ENCODE measurements at regions of chr16 and their contacts with region 1.

Region 1: GRCh38 chr16:75402821-75403475 is 30.4 kb downstream of the CFDP1 start:
- DNase-seq: no peak
- H3K4me3 Mint-ChIP-seq: no peak overlapping the region
- H3K27ac Mint-ChIP-seq: no peak overlapping the region
- H3K4me1 Mint-ChIP-seq: peaks cover 9% of the 10 kb centered on the region
- H3K27me3 Mint-ChIP-seq: no peaks in the 10 kb centered on the region

Region 2: GRCh38 chr16:75234856-75235696 is 167.9 kb before region 1 on chr16:
- intact Hi-C with region 1: loop called (anchors 5 kb)
- DNase-seq: no peak
- H3K4me3 Mint-ChIP-seq: no peak overlapping the region
- H3K27ac Mint-ChIP-seq: no peak overlapping the region
- H3K4me1 Mint-ChIP-seq: no peaks in the 10 kb centered on the region
- H3K27me3 Mint-ChIP-seq: peaks cover 2% of the 10 kb centered on the region

Region 3: GRCh38 chr16:75311383-75311938 is 91.5 kb before region 1 on chr16:
- intact Hi-C with region 1: no loop called
- DNase-seq: no peak
- H3K4me3 Mint-ChIP-seq: no peak overlapping the region
- H3K27ac Mint-ChIP-seq: no peak overlapping the region
- H3K4me1 Mint-ChIP-seq: peaks cover 4% of the 10 kb centered on the region
- H3K27me3 Mint-ChIP-seq: peaks cover 28% of the 10 kb centered on the region

Region 4: DNA sequence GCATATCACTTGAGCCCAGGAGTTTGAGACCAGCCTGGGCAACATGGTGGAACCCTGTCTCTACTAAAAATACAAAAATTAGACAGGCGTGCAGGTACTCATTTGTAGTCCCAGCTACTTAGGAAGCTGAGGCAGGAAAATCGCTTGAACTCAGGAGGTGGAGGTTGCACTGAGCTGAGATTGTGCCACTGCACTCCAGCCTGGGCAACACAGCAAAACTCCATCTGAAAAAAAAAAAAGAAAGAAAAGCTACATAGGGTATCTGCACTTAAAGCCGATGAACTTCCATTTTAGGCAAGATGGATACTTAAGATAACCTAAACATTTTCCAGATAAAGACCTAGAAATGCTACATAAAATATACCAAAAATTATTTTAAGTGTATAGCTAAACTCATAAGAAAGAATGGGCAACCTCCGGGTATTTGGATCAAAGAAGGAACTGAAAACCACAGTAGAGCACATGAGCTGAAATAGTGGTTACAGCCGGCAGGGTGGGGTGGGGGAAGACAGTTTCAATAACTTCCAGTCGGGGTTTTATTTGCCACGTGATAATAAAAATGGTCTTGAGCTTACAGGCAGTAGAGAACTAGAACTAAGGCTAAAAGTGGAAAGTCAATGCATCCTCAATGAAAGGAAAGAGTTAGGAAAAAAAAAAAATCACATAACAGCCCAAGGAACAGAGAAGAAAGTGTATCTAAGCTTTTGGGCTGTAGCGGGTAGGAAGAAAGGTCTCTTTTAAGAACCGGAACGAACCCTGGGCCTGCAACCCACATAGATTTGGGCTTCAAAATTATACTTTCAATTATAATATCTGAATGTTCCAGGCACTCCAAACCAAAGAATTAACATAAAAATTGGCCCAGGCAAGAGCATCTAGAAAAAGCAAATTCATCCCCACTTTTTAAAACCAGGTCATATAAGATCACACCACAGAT is 22.8 kb before region 1 on chr16:
- intact Hi-C with region 1: loop called (anchors 2 kb)
- DNase-seq: peak; percentile 45
- H3K4me3 Mint-ChIP-seq: peak overlapping the region; percentile 38
- H3K27ac Mint-ChIP-seq: peak overlapping the region; percentile 50
- H3K4me1 Mint-ChIP-seq: peaks cover 38% of the 10 kb centered on the region
- H3K27me3 Mint-ChIP-seq: peaks cover 46% of the 10 kb centered on the region

Measured in activated T-helper 2 cell treated with anti-CD3 and anti-CD28 coated beads, Interferon-gamma antibody, Interleukin-2, Interleukin-4, amounts not matched to agents 10 μg/mL and 5 μg/mL and 100 μg/mL, durations not matched to agents 14 hours and 24 hours and 36 hours (primary cell).